Activated T-helper 1 cell treated with anti-CD3 and anti-CD28 coated beads, Interleukin-12 subunit alpha, Interleukin-12 subunit beta, Interleukin-2, Interleukin-4 antibody, amounts not matched to agents 30 ng/mL and 10 ng/mL and 1 ng/mL, durations not matched to agents 14 hours and 24 hours and 36 hours (primary cell): ENCODE measurements at regions of chr10 and their contacts with region 1.

Region 1: GRCh38 chr10:123008439-123009205 is at the starts of genes ACADSB and IKZF5:
- DNase-seq: peak; percentile 94
- H3K4me3 Mint-ChIP-seq: peak within 1 kb of the TSS; percentile 95
- H3K27ac Mint-ChIP-seq: peak within 1 kb of the TSS; percentile 95
- H3K4me1 Mint-ChIP-seq: peaks cover 43% of the 10 kb centered on the region
- H3K27me3 Mint-ChIP-seq: no peaks in the 10 kb centered on the region
- total RNA-seq, gene ACADSB: 25.8 and 26.5 TPM in 2 replicates
- total RNA-seq, gene IKZF5: 17.4 and 21.9 TPM in 2 replicates

Region 2: DNA sequence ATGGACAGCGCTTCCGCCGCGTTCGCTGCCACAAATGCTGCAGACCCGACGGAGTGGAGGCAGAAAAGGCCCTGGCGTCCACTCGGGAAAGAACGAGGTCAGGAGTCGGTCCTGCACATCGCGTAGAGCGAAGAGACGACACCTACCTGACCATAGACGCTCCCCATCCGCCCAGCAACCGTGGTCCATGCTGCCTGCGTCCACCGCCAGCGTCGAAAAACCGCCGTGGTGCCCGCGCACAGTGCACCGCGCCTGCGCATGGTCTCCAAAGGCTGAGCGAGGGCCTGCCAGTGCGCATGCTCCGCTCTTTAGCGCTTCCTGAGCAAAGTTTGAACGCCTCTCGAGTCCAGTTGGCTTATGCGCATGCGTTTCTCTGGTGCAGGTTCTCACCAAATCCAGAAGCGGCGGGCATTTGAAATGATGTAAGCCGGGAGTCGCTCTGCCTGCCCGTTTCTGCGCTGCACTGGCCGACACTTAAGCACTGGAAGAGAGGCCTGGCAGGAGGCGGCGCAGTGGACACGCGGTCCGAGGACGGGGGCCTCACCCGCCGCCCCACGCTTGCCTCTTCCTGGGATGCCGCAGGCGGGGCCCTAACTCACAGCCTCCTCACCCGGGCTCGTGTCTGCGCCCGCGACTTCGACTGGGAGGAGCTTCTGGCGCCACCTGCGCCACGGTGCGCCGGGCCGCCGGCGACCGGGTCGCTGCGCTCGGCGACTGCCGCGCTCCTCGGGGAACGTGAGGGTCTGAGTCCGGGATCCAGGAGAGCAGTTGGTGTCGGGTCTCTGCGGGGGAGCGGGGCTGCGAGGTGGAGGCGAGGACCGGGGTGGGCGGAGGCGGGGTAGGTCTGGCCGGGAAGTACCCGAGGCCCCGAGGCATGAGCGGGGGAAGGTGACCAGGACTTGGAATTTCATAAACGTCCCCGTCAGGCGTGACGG is 129.0 kb before region 1 on chr10 and contains the start of gene FAM24B:
- intact Hi-C with region 1: loop called (anchors 1 kb)
- DNase-seq: peak; percentile 94
- H3K4me3 Mint-ChIP-seq: peak within 1 kb of the TSS; percentile 97
- H3K27ac Mint-ChIP-seq: peak within 1 kb of the TSS; percentile 93
- H3K4me1 Mint-ChIP-seq: peaks cover 53% of the 10 kb centered on the region
- H3K27me3 Mint-ChIP-seq: no peaks in the 10 kb centered on the region
- total RNA-seq, gene FAM24B: 13.1 and 18.4 TPM in 2 replicates

Region 3: DNA sequence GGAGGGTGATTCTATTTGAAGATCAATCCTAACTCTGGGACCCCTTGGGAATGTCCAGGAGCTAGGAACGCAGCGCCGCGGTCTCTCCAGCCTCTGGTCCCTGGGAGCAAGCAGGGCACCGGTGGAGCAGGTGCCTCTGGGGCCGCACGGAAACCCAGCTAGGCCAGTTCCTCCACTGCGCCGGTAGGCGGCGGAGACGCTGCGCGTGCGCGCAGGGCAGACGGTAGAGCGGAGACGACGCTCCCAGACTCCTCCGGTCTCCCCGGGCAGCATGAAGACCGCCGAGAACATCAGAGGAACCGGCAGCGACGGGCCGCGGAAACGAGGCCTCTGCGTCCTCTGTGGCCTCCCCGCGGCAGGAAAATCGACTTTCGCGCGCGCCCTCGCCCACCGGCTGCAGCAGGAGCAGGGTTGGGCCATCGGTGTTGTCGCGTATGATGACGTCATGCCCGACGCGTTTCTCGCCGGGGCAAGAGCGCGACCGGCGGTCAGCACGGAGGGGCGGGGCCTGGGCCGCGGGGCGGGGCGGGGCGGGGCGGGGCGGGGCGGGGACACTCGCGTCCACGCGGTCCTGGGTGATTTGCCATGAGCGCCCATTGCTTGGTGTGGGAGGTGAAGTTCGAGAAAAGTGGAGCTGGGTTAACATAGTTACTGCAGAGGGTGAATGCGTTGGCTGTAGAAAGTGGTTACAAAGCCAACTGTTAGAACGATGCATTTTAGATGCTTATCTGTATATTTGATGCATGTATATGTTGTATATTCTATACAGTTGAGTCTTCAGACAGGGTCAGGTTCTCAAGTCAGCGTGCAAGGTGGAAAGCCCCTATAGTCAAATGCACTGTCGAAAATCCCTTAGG is 28.2 kb before region 1 on chr10 and contains the start of gene PSTK:
- intact Hi-C with region 1: loop called (anchors 1 kb)
- DNase-seq: peak; percentile 83
- H3K4me3 Mint-ChIP-seq: peak within 1 kb of the TSS; percentile 87
- H3K27ac Mint-ChIP-seq: peak within 1 kb of the TSS; percentile 97
- H3K4me1 Mint-ChIP-seq: peaks cover 22% of the 10 kb centered on the region
- H3K27me3 Mint-ChIP-seq: peaks cover 12% of the 10 kb centered on the region
- total RNA-seq, gene PSTK: 4.5 and 4.8 TPM in 2 replicates

Region 4: DNA sequence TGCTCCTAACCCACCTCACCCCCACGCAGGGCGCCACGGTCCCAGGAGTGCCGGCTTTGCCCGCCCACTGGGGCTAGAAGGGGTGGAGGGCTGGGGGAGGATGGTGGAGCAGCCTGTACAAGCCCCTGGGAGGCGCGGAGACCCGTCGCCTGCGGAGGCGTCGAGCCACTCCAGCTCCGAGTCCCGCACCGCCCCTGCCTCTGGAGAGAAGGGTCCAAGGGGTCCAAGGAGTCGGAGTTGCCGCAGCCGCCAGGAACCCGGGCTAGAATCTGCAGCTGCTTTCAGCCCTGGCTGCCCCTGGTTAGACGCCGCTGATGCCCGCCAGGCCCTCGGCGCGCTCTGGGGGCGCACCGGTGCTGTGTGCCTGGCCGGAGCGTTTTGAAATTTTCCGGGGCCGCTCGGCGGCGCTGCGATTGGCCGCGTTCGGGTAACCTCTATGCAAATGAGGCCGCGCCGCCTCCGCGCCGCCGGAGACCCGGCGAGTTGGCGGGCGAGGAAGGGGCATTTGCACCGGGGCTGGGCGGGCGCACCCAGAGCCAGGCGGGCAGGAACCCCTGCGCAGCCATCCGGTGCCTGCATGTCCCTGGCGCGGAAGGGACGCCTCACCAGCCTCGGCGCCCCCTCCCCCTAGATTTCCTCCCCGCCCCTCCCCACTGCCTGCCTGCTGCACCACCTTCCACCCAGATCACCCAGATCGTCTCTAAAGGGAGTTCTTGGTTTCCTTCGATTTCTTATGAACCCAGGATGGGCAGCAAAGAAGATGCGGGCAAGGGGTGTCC is 139.2 kb after region 1 on chr10 and contains the start of gene HMX2:
- intact Hi-C with region 1: no loop called
- DNase-seq: no peak
- H3K4me3 Mint-ChIP-seq: peak within 1 kb of the TSS; percentile 57
- H3K27ac Mint-ChIP-seq: peak within 1 kb of the TSS; percentile 78
- H3K4me1 Mint-ChIP-seq: peaks cover 43% of the 10 kb centered on the region
- H3K27me3 Mint-ChIP-seq: peaks cover 59% of the 10 kb centered on the region
- total RNA-seq, gene HMX2: not detected in 2 replicates

Region 5: DNA sequence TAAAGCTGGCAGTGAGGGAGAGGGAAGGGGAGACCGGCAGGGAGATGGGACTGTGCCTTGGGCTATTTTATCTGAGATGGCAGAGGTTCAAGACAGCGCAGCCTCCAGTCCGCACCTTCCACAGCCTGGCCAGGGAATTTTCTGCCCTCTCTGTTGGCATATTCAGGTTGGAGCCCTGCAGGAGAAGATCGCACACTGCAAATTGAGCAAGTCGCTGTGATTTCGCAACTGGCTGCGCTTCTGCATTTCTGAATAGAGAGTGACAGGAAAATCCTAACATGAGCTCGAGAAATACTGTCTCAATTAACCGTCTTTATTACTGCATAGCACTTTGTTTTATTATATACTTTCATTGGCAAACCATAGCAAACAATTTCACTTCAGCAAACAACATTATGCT is 418.8 kb after region 1 on chr10:
- intact Hi-C with region 1: no loop called
- DNase-seq: no peak
- H3K4me3 Mint-ChIP-seq: no peak overlapping the region
- H3K27ac Mint-ChIP-seq: no peak overlapping the region
- H3K4me1 Mint-ChIP-seq: no peaks in the 10 kb centered on the region
- H3K27me3 Mint-ChIP-seq: peaks cover 3% of the 10 kb centered on the region

Region 6: GRCh38 chr10:124461438-124462347 is 1453.1 kb after region 1 on chr10 and contains the start of gene LHPP:
- intact Hi-C with region 1: loop called (anchors 5 kb)
- DNase-seq: peak; percentile 86
- H3K4me3 Mint-ChIP-seq: peak within 1 kb of the TSS; percentile 87
- H3K27ac Mint-ChIP-seq: peak within 1 kb of the TSS; percentile 98
- H3K4me1 Mint-ChIP-seq: peaks cover 26% of the 10 kb centered on the region
- H3K27me3 Mint-ChIP-seq: peaks cover 14% of the 10 kb centered on the region
- total RNA-seq, gene LHPP: 4.6 and 5.0 TPM in 2 replicates